ENCODE measurements at regions of chr2 and their contacts with region 1.

Region 1: DNA sequence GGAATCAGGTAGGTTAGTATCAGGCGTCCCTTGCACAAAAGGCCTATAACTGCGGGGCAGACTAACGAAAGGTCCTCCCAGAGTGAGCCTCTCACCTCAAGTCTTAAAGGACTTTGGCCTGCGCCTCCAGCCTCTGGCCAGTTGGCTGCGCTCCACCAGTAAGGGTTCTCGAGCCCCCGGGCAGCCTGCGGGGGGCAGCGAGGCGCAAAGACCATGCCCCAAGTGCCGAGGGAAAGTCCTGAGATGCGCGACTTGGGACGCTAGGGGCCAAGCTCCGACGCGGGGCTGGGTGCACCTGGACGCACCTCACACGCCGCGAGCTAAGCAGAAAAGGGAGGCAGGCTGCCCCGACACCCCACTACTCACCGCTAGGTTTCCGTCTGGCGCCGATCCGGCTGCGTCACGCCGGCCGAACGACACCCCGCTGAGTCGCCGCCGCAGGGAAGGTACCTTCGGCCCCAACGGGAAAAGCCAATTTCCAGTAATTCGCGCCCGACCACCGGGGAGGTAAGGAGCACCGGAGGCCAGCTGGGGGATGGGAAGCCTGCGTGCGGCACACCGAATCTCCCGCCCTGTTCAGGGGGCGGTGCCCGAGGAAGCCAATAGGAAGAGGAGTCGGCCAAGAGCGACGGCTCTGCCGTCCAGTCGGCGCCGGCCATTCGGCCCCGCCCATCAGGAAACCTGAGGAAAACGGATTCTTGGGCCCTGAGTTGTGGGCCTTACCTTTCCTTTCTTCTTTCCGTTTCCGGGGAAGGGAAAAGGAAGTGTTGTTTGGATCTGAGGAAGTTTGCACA is at the start of gene ORC2:
- DNase-seq: peak; percentile 94
- ATAC-seq: peak; percentile 96
- H3K4me3 Mint-ChIP-seq: peak within 1 kb of the TSS; percentile 92
- H3K27ac Mint-ChIP-seq: peak within 1 kb of the TSS; percentile 96
- H3K4me1 Mint-ChIP-seq: peaks cover 65% of the 10 kb centered on the region
- H3K27me3 Mint-ChIP-seq: no peaks in the 10 kb centered on the region
- total RNA-seq, gene ORC2: 54.8 to 57.8 TPM

Region 2: GRCh38 chr2:200975672-200976071 is 12.4 kb after region 1 on chr2:
- CTCF ChIA-PET with region 1: interaction called, 27 read pairs
- DNase-seq: no peak
- ATAC-seq: no peak
- H3K4me3 Mint-ChIP-seq: no peak overlapping the region
- H3K27ac Mint-ChIP-seq: no peak overlapping the region
- H3K4me1 Mint-ChIP-seq: no peaks in the 10 kb centered on the region
- H3K27me3 Mint-ChIP-seq: no peaks in the 10 kb centered on the region

Region 3: GRCh38 chr2:201176081-201176481 is 212.8 kb after region 1 on chr2:
- CTCF ChIA-PET with region 1: interaction called, 14 read pairs
- DNase-seq: no peak
- ATAC-seq: no peak
- H3K4me3 Mint-ChIP-seq: no peak overlapping the region
- H3K27ac Mint-ChIP-seq: no peak overlapping the region
- H3K4me1 Mint-ChIP-seq: peaks cover 31% of the 10 kb centered on the region
- H3K27me3 Mint-ChIP-seq: no peaks in the 10 kb centered on the region